ENCODE measurements at regions of chr20 and their contacts with region 1.

Region 1: GRCh38 chr20:35893942-35894341 is 60.4 kb downstream of the SCAND1 start:
- DNase-seq: no peak

Region 2: GRCh38 chr20:35718972-35719635 is 174.8 kb before region 1 on chr20:
- intact Hi-C with region 1: loop called in 1 of 2 experiments (anchors 5 kb)
- DNase-seq: no peak

Measured in posterior vena cava (tissue), 2 donors.